Activated CD4-positive, alpha-beta T cell treated with anti-CD3 and anti-CD28 coated beads for 36 hours (primary cell): ENCODE measurements at regions of chr1 and their contacts with region 1.

Region 1: DNA sequence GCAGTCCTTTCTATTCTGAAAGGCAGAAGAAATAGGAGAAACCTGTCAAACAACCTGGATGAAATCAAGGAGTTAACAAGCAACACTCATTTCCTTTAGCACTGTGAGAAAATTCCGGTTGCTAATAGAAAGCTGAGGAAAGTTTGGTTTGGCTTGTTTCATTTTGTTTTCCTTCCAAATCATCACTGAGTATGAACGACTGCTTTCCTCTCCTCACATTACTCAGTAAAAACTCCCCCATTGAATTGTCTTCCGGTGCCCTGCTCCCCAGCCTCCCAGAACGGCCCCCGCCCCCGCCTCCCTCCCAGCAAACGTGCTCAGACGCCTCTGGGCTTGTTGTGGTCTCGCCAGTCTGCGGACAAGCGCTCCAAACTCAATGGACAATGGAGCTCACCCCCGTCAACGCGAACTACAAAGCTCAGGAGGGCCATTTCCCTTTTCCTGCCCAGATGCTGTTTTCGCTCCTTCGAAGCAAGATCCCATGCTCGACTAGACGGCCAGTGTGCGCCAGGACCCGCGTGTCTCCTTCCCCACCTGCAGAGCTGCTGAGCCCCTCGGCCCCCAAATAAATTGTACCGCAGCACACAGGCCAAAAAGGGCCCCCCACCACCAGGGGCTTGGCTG is 747 bp downstream of the STX6 start:
- DNase-seq: peak; percentile 85
- ATAC-seq: peak; percentile 66
- H3K4me3 Mint-ChIP-seq: peak overlapping the region; percentile 89
- H3K27ac Mint-ChIP-seq: peak overlapping the region; percentile 97
- H3K4me1 Mint-ChIP-seq: peaks cover 42% of the 10 kb centered on the region
- H3K27me3 Mint-ChIP-seq: peaks cover 5% of the 10 kb centered on the region

Region 2: GRCh38 chr1:179882243-179883039 is 1139.5 kb before region 1 on chr1 and contains the start of gene TOR1AIP1:
- CTCF ChIA-PET with region 1: no interaction called
- POLR2A ChIA-PET with region 1: interaction called, 3 read pairs
- intact Hi-C with region 1: loop called in 1 of 2 experiments (anchors 2 kb)
- DNase-seq: peak; percentile 98
- ATAC-seq: peak; percentile 80
- H3K4me3 Mint-ChIP-seq: peak within 1 kb of the TSS; percentile 87
- H3K27ac Mint-ChIP-seq: peak within 1 kb of the TSS; percentile 98
- H3K4me1 Mint-ChIP-seq: peaks cover 59% of the 10 kb centered on the region
- H3K27me3 Mint-ChIP-seq: no peaks in the 10 kb centered on the region
- total RNA-seq, gene TOR1AIP1: 50.1 to 71.6 TPM

Region 3: DNA sequence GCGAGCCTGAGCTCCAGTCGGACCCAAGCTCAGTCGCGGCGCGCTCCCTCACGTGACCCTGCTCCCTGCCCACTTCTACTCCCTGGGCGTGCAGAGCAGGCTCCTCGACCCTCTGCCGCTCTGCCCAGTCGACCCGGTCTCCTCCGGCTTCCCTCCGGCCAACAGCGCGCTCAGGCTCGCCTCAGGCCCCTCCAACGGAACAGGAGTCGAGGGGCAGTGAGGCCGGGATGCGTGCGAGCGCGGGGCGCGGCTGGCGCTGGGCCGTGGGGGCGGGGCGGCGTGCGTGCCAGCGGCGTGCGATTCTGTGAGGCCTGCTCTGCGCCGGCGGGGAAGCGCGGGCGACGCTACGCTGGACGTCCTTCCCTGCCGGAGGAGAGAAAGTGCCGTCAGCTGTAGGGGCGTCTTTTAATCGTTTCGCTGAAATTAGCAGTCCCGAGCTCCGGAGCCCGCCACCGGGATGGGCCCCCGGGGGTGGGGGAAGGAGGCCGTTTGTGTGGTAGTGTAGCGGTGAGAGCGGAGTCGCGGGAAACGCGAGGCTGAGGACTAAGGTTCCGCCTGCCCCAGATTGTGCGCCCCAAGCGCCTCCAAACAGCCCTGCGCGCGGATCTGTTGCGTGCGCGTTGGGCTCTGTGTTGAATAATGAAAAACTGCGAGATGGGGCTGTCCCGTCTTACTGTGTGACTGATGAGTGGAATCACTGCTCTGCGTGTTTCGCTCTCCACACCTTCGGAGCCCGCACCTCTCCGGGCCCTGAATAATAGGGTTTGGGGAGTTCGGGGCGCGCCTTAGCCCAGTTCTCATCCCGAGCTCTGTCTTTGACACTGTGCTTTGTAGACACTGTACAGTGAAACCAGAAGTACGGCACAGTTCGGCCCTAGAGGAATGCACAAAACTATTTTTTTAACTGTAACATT is 519.3 kb before region 1 on chr1 and contains the start of gene ACBD6:
- CTCF ChIA-PET with region 1: interaction called, 3 read pairs
- POLR2A ChIA-PET with region 1: no interaction called
- intact Hi-C with region 1: loop called (anchors 2 to 10 kb)
- DNase-seq: peak; percentile 94
- ATAC-seq: peak; percentile 95
- H3K4me3 Mint-ChIP-seq: peak within 1 kb of the TSS; percentile 96
- H3K27ac Mint-ChIP-seq: peak within 1 kb of the TSS; percentile 97
- H3K4me1 Mint-ChIP-seq: peaks cover 33% of the 10 kb centered on the region
- H3K27me3 Mint-ChIP-seq: no peaks in the 10 kb centered on the region
- total RNA-seq, gene ACBD6: 45.6 to 46.8 TPM

Region 4: GRCh38 chr1:180631766-180632325 is 390.1 kb before region 1 on chr1 and contains the start of gene XPR1:
- CTCF ChIA-PET with region 1: no interaction called
- POLR2A ChIA-PET with region 1: no interaction called
- intact Hi-C with region 1: loop called in 1 of 2 experiments (anchors 5 kb)
- DNase-seq: peak; percentile 99
- ATAC-seq: peak; percentile 99
- H3K4me3 Mint-ChIP-seq: no peak within 1 kb of the TSS
- H3K27ac Mint-ChIP-seq: peak within 1 kb of the TSS; percentile 76
- H3K4me1 Mint-ChIP-seq: peaks cover 9% of the 10 kb centered on the region
- H3K27me3 Mint-ChIP-seq: peaks cover 3% of the 10 kb centered on the region
- total RNA-seq, gene XPR1: 18.4 to 25.2 TPM

Region 5: GRCh38 chr1:180981596-180982387 is 40.1 kb before region 1 on chr1:
- CTCF ChIA-PET with region 1: no interaction called
- POLR2A ChIA-PET with region 1: no interaction called
- intact Hi-C with region 1: loop called in 1 of 2 experiments (anchors 5 kb)
- DNase-seq: peak; percentile 74
- ATAC-seq: peak; percentile 96
- H3K4me3 Mint-ChIP-seq: peak overlapping the region; percentile 15
- H3K27ac Mint-ChIP-seq: peak overlapping the region; percentile 73
- H3K4me1 Mint-ChIP-seq: peaks cover 26% of the 10 kb centered on the region
- H3K27me3 Mint-ChIP-seq: no peaks in the 10 kb centered on the region

Region 6: DNA sequence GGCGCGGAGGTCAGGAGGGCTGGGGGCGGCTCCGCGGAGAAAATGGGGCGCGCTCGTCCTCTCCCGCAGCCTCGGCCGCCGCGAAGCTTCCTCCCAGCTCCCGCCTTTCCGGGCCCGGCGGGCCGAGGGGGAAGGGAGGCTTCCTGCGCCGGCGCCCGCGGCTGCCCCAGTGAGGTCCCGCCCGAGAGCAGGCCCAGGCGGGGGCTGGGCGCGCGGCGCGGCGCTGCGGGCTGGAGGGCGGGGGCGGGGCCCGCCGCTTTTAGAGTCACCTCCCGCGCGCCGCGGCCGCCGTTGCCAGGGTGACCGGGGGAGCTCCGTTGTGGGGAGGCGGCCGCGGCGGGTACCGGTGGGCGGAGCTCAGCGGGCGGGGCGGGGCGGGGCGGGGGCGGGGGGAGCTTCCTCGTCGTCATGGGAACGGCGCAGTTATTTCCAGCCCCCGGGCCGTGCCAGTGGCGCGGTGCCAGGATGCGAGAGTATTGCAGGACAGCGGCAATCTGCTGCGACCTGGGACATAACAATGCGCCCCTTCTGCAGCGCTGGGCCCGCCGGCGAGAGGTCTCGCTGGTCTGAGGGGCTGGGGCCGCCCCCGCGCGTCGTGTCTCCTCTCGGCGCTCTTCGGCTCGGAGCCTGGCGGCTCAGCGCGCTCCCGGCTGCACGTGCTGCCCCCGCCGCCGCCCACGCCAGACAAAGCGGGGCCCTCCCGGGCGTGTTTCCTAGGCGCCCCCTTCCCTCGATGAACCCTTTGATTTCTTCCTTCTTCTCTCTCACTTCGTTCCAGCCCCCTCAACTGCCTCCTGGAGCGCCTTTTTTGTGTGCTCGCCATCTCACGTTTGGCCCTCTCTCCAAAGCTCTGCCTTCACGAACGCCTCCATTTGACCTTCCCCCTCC is 83.5 kb after region 1 on chr1:
- CTCF ChIA-PET with region 1: interaction called, 3 read pairs
- POLR2A ChIA-PET with region 1: interaction called, 4 read pairs
- intact Hi-C with region 1: loop called in 1 of 2 experiments (anchors 1 kb)
- DNase-seq: peak; percentile 95
- ATAC-seq: peak; percentile 83
- H3K4me3 Mint-ChIP-seq: peak overlapping the region; percentile 72
- H3K27ac Mint-ChIP-seq: peak overlapping the region; percentile 55
- H3K4me1 Mint-ChIP-seq: peaks cover 59% of the 10 kb centered on the region
- H3K27me3 Mint-ChIP-seq: peaks cover 15% of the 10 kb centered on the region

Region 7: GRCh38 chr1:182029379-182030331 is 1007.7 kb after region 1 on chr1:
- CTCF ChIA-PET with region 1: no interaction called
- POLR2A ChIA-PET with region 1: no interaction called
- intact Hi-C with region 1: loop called in 1 of 2 experiments (anchors 1 kb)
- DNase-seq: peak; percentile 99
- ATAC-seq: peak; percentile 96
- H3K4me3 Mint-ChIP-seq: peak overlapping the region; percentile 86
- H3K27ac Mint-ChIP-seq: peak overlapping the region; percentile 97
- H3K4me1 Mint-ChIP-seq: peaks cover 11% of the 10 kb centered on the region
- H3K27me3 Mint-ChIP-seq: no peaks in the 10 kb centered on the region